ENCODE measurements at regions of chr15 and their contacts with region 1.

Region 1: GRCh38 chr15:99275525-99276128 is 24.3 kb downstream of the LRRC28 start:
- DNase-seq: no peak
- ATAC-seq: no peak
- H3K4me3 ChIP-seq: no peak overlapping the region
- H3K4me3 Mint-ChIP-seq: no peak overlapping the region
- H3K27ac ChIP-seq: no peak overlapping the region
- H3K27ac Mint-ChIP-seq: no peak overlapping the region
- H3K4me1 ChIP-seq: no peaks in the 10 kb centered on the region
- H3K4me1 Mint-ChIP-seq: peaks cover 29% of the 10 kb centered on the region
- H3K27me3 ChIP-seq: no peaks in the 10 kb centered on the region
- H3K27me3 Mint-ChIP-seq: no peaks in the 10 kb centered on the region
- CTCF ChIP-seq: no peak

Region 2: GRCh38 chr15:99343881-99344551 is 68.4 kb after region 1 on chr15:
- CTCF ChIA-PET with region 1: no interaction called
- POLR2A ChIA-PET with region 1: no interaction called
- intact Hi-C with region 1: loop called in 1 of 2 experiments (anchors 10 kb)
- DNase-seq: peak; percentile 33 to 70 (median 50)
- ATAC-seq: peak; percentile 83
- H3K4me3 ChIP-seq: no peak overlapping the region
- H3K4me3 Mint-ChIP-seq: no peak overlapping the region
- H3K27ac ChIP-seq: no peak overlapping the region
- H3K27ac Mint-ChIP-seq: no peak overlapping the region
- H3K4me1 ChIP-seq: no peaks in the 10 kb centered on the region
- H3K4me1 Mint-ChIP-seq: no peaks in the 10 kb centered on the region
- H3K27me3 ChIP-seq: no peaks in the 10 kb centered on the region
- H3K27me3 Mint-ChIP-seq: no peaks in the 10 kb centered on the region
- CTCF ChIP-seq: peak; percentile 74

Region 3: DNA sequence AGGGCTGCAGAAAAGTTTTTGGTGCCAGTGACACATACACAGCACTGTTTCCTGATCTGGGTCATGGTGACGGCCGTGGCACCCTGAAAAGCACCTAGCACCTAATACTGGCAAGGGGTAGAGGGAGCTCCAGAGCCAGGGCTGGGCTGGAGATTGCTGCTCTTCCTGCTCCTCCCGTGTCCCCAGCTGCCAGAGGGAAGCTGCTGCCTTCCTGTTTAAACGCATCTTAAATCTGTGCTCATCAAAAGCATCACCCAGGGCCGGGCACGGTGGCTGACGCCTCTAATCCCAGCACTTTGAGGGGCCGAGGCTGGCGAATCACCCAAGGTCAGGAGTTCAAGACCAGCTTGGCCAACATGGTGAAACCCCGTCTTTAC is 133.5 kb after region 1 on chr15:
- CTCF ChIA-PET with region 1: no interaction called
- POLR2A ChIA-PET with region 1: no interaction called
- intact Hi-C with region 1: no loop called
- DNase-seq: peak in 10 of 14 experiments; percentile 25 to 67 (median 49)
- ATAC-seq: peak; percentile 72
- H3K4me3 ChIP-seq: no peak overlapping the region
- H3K4me3 Mint-ChIP-seq: no peak overlapping the region
- H3K27ac ChIP-seq: no peak overlapping the region
- H3K27ac Mint-ChIP-seq: no peak overlapping the region
- H3K4me1 ChIP-seq: peaks cover 18% of the 10 kb centered on the region
- H3K4me1 Mint-ChIP-seq: peaks cover 14% of the 10 kb centered on the region
- H3K27me3 ChIP-seq: no peaks in the 10 kb centered on the region
- H3K27me3 Mint-ChIP-seq: no peaks in the 10 kb centered on the region
- CTCF ChIP-seq: peak; percentile 33

Region 4: GRCh38 chr15:99495430-99496301 is 220.0 kb after region 1 on chr15:
- CTCF ChIA-PET with region 1: no interaction called
- POLR2A ChIA-PET with region 1: no interaction called
- intact Hi-C with region 1: no loop called
- DNase-seq: peak in 1 of 14 experiments; percentile 18
- ATAC-seq: peak; percentile 39
- H3K4me3 ChIP-seq: no peak overlapping the region
- H3K4me3 Mint-ChIP-seq: peak overlapping the region; percentile 64
- H3K27ac ChIP-seq: no peak overlapping the region
- H3K27ac Mint-ChIP-seq: peak overlapping the region; percentile 80
- H3K4me1 ChIP-seq: peaks cover 19% of the 10 kb centered on the region
- H3K4me1 Mint-ChIP-seq: peaks cover 23% of the 10 kb centered on the region
- H3K27me3 ChIP-seq: no peaks in the 10 kb centered on the region
- H3K27me3 Mint-ChIP-seq: no peaks in the 10 kb centered on the region
- CTCF ChIP-seq: no peak

Region 5: DNA sequence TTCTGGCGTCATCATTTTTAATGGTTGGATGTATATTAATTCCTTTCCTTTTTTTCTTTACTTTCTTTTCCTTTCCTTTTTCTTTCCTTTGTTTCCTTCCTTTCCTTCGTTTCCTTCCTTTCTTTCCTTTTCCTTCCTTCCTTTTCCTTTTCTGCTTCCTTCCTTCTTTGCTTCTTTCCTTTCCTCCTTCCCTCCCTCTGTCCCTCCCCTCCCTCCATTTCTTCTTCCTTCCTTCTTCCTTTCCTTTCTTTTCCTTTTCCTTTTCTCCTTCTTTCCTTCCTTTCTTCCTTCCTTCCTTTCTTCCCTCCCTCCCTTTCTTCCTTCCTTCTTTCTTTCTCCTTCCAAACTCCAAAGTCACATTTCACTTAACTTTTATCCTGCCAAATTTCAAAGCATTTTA is 512.6 kb after region 1 on chr15:
- CTCF ChIA-PET with region 1: no interaction called
- POLR2A ChIA-PET with region 1: interaction called, 4 read pairs
- intact Hi-C with region 1: loop called in 1 of 2 experiments (anchors 5 kb)
- DNase-seq: no peak
- ATAC-seq: no peak
- H3K4me3 ChIP-seq: no peak overlapping the region
- H3K4me3 Mint-ChIP-seq: no peak overlapping the region
- H3K27ac ChIP-seq: no peak overlapping the region
- H3K27ac Mint-ChIP-seq: no peak overlapping the region
- H3K4me1 ChIP-seq: no peaks in the 10 kb centered on the region
- H3K4me1 Mint-ChIP-seq: no peaks in the 10 kb centered on the region
- H3K27me3 ChIP-seq: no peaks in the 10 kb centered on the region
- H3K27me3 Mint-ChIP-seq: no peaks in the 10 kb centered on the region
- CTCF ChIP-seq: no peak

Measured in CD4-positive, alpha-beta T cell (primary cell).